ENCODE measurements at regions of chr17 and their contacts with region 1.

Region 1: DNA sequence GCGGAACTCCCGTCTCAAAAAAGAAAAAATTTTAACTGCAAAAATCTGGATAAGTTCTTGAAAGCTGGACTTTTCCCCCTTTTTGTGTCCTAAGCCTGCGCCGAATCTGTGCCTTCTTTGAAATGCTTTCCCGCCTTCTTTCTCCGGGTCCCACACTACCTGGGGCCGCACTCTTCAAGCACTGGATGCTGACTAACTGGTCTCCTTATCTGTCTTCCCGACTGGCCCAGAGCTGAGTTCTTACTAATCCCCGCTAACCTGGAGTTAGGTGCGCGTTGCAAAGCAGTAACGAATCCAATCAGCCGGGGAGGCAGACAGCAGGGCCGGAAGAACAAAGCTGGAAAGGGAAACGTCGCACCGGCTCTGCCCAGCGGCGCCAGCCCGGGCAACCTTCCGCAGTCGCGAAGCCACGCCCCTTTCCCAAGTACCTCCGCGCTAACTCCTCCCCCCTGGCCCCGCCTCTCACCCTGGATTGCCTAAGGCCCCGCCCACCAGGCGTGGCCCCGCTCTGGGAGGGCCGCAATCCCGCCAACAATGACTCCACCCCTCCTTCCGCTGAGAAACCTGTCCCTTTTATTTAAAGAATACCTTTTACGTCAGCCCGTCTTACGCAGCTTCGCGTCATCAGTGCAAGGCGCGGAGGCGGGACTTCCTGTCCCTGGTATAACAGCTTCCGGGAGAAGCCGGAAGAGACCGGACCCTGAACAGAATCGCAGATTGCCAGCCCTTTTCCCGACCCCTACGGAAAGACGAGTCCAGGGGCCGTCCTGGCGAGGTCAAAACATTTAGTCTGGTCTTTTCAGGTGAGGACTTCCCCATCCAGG is at the start of gene TMUB2:
- DNase-seq: peak; percentile 99 to 100 (median 100)
- ATAC-seq: peak; percentile 97
- H3K4me3 ChIP-seq: peak within 1 kb of the TSS; percentile 89 to 94
- H3K4me3 Mint-ChIP-seq: peak within 1 kb of the TSS; percentile 100
- H3K27ac ChIP-seq: peak within 1 kb of the TSS; percentile 99
- H3K27ac Mint-ChIP-seq: peak within 1 kb of the TSS; percentile 100
- H3K4me1 ChIP-seq: peaks cover 30% of the 10 kb centered on the region
- H3K4me1 Mint-ChIP-seq: peaks cover 48% of the 10 kb centered on the region
- H3K27me3 ChIP-seq: no peaks in the 10 kb centered on the region
- H3K27me3 Mint-ChIP-seq: no peaks in the 10 kb centered on the region
- CTCF ChIP-seq: no peak
- total RNA-seq, gene TMUB2: 43.2 to 43.8 TPM

Region 2: GRCh38 chr17:42609182-42609813 is 1577.2 kb before region 1 on chr17 and contains the starts of genes RETREG3 and TUBG1:
- CTCF ChIA-PET with region 1: no interaction called
- POLR2A ChIA-PET with region 1: no interaction called
- intact Hi-C with region 1: loop called in 1 of 2 experiments (anchors 5 kb)
- DNase-seq: peak; percentile 98 to 100 (median 99)
- ATAC-seq: peak; percentile 92
- H3K4me3 ChIP-seq: peak within 1 kb of the TSS; percentile 90 to 94
- H3K4me3 Mint-ChIP-seq: peak within 1 kb of the TSS; percentile 100
- H3K27ac ChIP-seq: peak within 1 kb of the TSS; percentile 90 to 91
- H3K27ac Mint-ChIP-seq: peak within 1 kb of the TSS; percentile 99
- H3K4me1 ChIP-seq: peaks cover 39% of the 10 kb centered on the region
- H3K4me1 Mint-ChIP-seq: peaks cover 48% of the 10 kb centered on the region
- H3K27me3 ChIP-seq: no peaks in the 10 kb centered on the region
- H3K27me3 Mint-ChIP-seq: no peaks in the 10 kb centered on the region
- CTCF ChIP-seq: no peak
- total RNA-seq, gene RETREG3: 59.0 to 59.3 TPM
- total RNA-seq, gene TUBG1: 4.9 to 8.4 TPM

Region 3: GRCh38 chr17:44006598-44007345 is 179.7 kb before region 1 on chr17:
- CTCF ChIA-PET with region 1: no interaction called
- POLR2A ChIA-PET with region 1: no interaction called
- intact Hi-C with region 1: loop called (anchors 5 kb)
- DNase-seq: peak; percentile 91 to 99 (median 97)
- ATAC-seq: peak; percentile 88
- H3K4me3 ChIP-seq: peak overlapping the region; percentile 50 to 60
- H3K4me3 Mint-ChIP-seq: peak overlapping the region; percentile 88
- H3K27ac ChIP-seq: peak overlapping the region in 1 of 2 experiments; percentile 22
- H3K27ac Mint-ChIP-seq: no peak overlapping the region
- H3K4me1 ChIP-seq: peaks cover 30% of the 10 kb centered on the region
- H3K4me1 Mint-ChIP-seq: peaks cover 21% of the 10 kb centered on the region
- H3K27me3 ChIP-seq: peaks cover 0 to 17% of the 10 kb centered on the region in 2 experiments
- H3K27me3 Mint-ChIP-seq: peaks cover 5% of the 10 kb centered on the region
- CTCF ChIP-seq: no peak

Region 4: DNA sequence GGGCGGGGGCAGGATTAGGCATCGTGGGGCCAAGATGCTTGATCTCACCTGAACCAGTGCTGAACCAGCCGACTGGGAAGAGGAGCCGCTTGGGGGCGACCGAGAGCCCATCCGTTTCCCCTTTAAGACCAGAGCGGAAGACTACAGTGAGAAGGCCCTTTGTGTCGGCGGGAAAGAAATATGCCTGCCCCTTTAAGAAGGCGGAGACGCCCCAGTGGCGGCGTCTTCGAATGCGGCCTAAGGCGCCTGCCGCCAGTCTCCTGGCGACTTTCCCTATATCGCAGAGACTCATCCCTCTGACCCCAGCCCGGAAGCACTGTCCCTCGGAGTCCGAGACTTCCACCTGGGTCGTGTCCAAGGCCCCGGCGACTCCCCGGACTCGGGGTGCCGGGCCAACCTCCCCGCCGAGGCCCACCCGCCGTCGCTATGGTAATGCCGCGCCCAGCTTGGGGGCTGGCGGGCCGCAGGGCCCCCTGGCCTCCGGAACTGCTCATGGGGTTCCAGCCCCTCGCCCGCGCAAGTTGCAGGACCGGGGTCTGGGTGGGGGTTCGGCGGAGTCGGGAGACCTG is 44.7 kb before region 1 on chr17 and contains the start of gene HROB:
- CTCF ChIA-PET with region 1: no interaction called
- POLR2A ChIA-PET with region 1: interaction called, 3 read pairs
- intact Hi-C with region 1: loop called (anchors 1 kb)
- DNase-seq: peak; percentile 95 to 99 (median 98)
- ATAC-seq: peak; percentile 91
- H3K4me3 ChIP-seq: peak within 1 kb of the TSS; percentile 62 to 80
- H3K4me3 Mint-ChIP-seq: peak within 1 kb of the TSS; percentile 84
- H3K27ac ChIP-seq: peak within 1 kb of the TSS; percentile 49 to 78
- H3K27ac Mint-ChIP-seq: peak within 1 kb of the TSS; percentile 49
- H3K4me1 ChIP-seq: peaks cover 11% of the 10 kb centered on the region
- H3K4me1 Mint-ChIP-seq: peaks cover 10% of the 10 kb centered on the region
- H3K27me3 ChIP-seq: peaks cover 0 to 14% of the 10 kb centered on the region in 2 experiments
- H3K27me3 Mint-ChIP-seq: peaks cover 10% of the 10 kb centered on the region
- CTCF ChIP-seq: peak; percentile 75
- total RNA-seq, gene HROB: 4.0 to 4.9 TPM

Region 5: GRCh38 chr17:44218344-44219107 is 32.0 kb after region 1 on chr17:
- CTCF ChIA-PET with region 1: interaction called, 4 read pairs
- POLR2A ChIA-PET with region 1: interaction called, 42 read pairs
- intact Hi-C with region 1: loop called (anchors 1 kb)
- DNase-seq: peak; percentile 71 to 96 (median 87)
- ATAC-seq: peak; percentile 55
- H3K4me3 ChIP-seq: peak overlapping the region; percentile 65 to 73
- H3K4me3 Mint-ChIP-seq: peak overlapping the region; percentile 74
- H3K27ac ChIP-seq: peak overlapping the region; percentile 46 to 78
- H3K27ac Mint-ChIP-seq: peak overlapping the region; percentile 96
- H3K4me1 ChIP-seq: peaks cover 56% of the 10 kb centered on the region
- H3K4me1 Mint-ChIP-seq: peaks cover 52% of the 10 kb centered on the region
- H3K27me3 ChIP-seq: no peaks in the 10 kb centered on the region
- H3K27me3 Mint-ChIP-seq: no peaks in the 10 kb centered on the region
- CTCF ChIP-seq: peak; percentile 53

Region 6: DNA sequence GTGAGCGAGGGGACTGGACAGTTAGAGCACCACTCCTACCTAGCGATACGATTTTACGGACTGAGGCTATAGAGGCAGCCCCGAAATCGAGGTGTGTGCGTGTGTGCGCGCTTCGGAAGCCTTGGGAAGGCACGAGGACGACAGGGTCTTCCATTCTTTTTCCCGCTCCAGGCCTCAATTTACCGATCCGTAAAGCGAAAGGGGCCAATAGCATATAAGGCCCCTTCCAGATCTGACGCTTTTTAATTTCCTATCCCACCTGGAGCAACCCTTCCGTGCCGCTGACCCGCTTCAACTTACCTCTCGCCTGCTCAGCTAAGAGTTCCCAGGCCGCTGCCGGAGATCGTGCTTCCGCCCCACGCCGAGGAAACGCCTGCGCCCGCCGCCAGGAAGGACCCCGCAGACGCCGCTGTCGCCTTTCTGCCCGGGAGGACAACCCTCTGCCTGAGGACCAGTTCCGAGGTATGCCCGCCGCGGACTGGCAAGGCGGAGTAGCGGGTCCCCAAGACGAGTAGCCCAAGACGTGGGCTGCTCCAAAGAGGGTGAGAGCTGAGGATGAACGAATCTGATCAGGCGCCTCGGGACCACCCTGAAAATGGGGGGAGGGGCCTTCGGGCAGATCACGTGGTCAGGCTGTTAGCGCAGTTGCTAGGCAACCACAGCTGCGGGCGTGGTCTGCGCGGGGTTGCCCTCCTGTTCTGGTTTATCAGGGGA is 712.7 kb after region 1 on chr17 and contains the start of gene EFTUD2:
- CTCF ChIA-PET with region 1: no interaction called
- POLR2A ChIA-PET with region 1: no interaction called
- intact Hi-C with region 1: loop called in 1 of 2 experiments (anchors 5 kb)
- DNase-seq: peak; percentile 88 to 98 (median 93)
- ATAC-seq: peak; percentile 95
- H3K4me3 ChIP-seq: peak within 1 kb of the TSS; percentile 71 to 84
- H3K4me3 Mint-ChIP-seq: peak within 1 kb of the TSS; percentile 97
- H3K27ac ChIP-seq: peak within 1 kb of the TSS; percentile 96 to 98
- H3K27ac Mint-ChIP-seq: peak within 1 kb of the TSS; percentile 100
- H3K4me1 ChIP-seq: peaks cover 18% of the 10 kb centered on the region
- H3K4me1 Mint-ChIP-seq: peaks cover 29% of the 10 kb centered on the region
- H3K27me3 ChIP-seq: no peaks in the 10 kb centered on the region
- H3K27me3 Mint-ChIP-seq: no peaks in the 10 kb centered on the region
- CTCF ChIP-seq: no peak
- total RNA-seq, gene EFTUD2: 131 to 133 TPM